GM10248 (cell line): ENCODE measurements at regions of chr11 and their contacts with region 1.

Region 1: DNA sequence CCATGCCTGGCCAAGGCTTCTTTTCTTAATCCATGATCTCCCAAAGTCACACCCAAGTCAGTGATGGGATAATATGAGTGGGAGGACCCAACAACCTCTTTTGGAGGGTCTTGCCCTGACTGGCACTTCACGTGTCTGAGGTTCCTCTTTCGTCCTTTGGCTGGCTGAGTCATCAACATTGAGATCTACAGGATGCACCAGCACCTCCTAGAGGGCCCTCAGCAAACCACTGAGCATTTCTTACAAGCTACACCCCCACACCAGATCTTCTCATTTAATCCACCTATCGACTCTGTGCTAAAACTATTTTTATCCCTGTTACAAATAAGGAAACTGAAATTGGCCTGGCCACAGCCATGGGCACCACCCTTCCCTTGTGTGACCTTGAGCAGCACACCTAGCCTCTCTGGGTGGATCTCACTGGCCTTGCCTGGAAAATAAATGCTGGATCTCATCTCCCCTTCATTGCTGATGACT is 63.4 kb downstream of the FLI1 start:
- DNase-seq: peak; percentile 82
- CTCF ChIP-seq: peak; percentile 75

Region 2: GRCh38 chr11:128714881-128715280 is 42.4 kb before region 1 on chr11:
- CTCF ChIA-PET with region 1: interaction called, 17 read pairs
- POLR2A ChIA-PET with region 1: no interaction called
- DNase-seq: no peak
- CTCF ChIP-seq: no peak

Region 3: GRCh38 chr11:128733440-128734102 is 23.7 kb before region 1 on chr11:
- CTCF ChIA-PET with region 1: interaction called, 87 read pairs
- POLR2A ChIA-PET with region 1: no interaction called
- DNase-seq: no peak
- CTCF ChIP-seq: no peak

Region 4: DNA sequence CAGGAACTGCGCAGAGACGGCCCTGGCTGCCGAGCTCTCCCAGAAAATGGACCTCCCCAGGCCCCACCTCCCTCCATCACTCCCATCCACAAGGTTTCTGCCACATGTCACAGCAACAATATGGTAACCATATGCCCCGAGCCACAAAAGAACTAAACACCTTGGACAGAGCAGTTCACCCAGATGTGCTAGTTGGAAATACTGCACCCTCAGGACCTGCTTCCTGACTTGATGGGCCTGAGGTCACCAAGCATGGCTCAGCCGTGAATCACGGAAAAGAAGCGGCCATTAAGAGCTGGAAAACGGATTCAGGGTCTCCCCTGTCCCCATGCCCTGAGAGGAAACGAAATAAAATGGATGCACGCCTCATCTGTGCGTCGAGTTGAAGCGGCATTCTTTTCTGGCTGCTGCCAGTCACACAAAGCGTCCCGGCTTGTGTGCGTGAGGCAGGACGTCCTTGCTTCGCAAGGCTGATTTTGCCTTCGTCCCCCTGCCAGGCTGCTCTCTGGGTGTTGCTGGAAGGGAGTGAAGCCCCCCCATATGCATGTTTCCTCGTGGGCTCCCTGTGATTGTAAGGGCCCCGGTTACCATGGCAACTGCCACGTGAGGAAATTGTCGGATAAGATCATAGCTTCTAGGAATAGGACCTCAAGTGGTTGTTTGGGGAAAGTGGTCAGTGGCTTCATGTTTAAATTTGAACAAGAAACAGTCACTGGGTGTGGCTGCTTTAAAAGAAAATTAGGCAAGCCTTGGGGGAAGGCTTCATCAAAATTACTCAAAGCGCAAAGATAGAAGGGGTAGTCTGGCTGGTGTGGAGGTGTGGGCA is 11.7 kb before region 1 on chr11:
- CTCF ChIA-PET with region 1: interaction called, 87 read pairs
- POLR2A ChIA-PET with region 1: no interaction called
- DNase-seq: no peak
- CTCF ChIP-seq: no peak

Region 5: GRCh38 chr11:128776424-128777284 is 19.4 kb after region 1 on chr11:
- CTCF ChIA-PET with region 1: interaction called, 14 read pairs
- POLR2A ChIA-PET with region 1: no interaction called
- DNase-seq: peak; percentile 61
- CTCF ChIP-seq: peak; percentile 42

Region 6: GRCh38 chr11:128784059-128784804 is 27.0 kb after region 1 on chr11:
- CTCF ChIA-PET with region 1: interaction called, 13 read pairs
- POLR2A ChIA-PET with region 1: no interaction called
- DNase-seq: no peak
- CTCF ChIP-seq: no peak